Activated CD8-positive, alpha-beta memory T cell treated with anti-CD3 and anti-CD28 coated beads, Interleukin-2, amount 10 ng/mL, durations not matched to agents 7 days and 5 days (primary cell): ENCODE measurements at regions of chr11 and their contacts with region 1.

Region 1: GRCh38 chr11:128157423-128158298 is 429.7 kb downstream of the ETS1 start:
- DNase-seq: peak; percentile 67
- ATAC-seq: peak; percentile 91
- H3K4me3 Mint-ChIP-seq: peak overlapping the region; percentile 47
- H3K27ac Mint-ChIP-seq: peak overlapping the region; percentile 77
- H3K4me1 Mint-ChIP-seq: peaks cover 4% of the 10 kb centered on the region
- H3K27me3 Mint-ChIP-seq: peaks cover 9% of the 10 kb centered on the region

Region 2: GRCh38 chr11:128039140-128040021 is 118.3 kb before region 1 on chr11:
- CTCF ChIA-PET with region 1: interaction called, 54 read pairs
- DNase-seq: peak; percentile 95
- ATAC-seq: peak; percentile 91
- H3K4me3 Mint-ChIP-seq: peak overlapping the region; percentile 71
- H3K27ac Mint-ChIP-seq: peak overlapping the region; percentile 96
- H3K4me1 Mint-ChIP-seq: peaks cover 40% of the 10 kb centered on the region
- H3K27me3 Mint-ChIP-seq: no peaks in the 10 kb centered on the region

Region 3: DNA sequence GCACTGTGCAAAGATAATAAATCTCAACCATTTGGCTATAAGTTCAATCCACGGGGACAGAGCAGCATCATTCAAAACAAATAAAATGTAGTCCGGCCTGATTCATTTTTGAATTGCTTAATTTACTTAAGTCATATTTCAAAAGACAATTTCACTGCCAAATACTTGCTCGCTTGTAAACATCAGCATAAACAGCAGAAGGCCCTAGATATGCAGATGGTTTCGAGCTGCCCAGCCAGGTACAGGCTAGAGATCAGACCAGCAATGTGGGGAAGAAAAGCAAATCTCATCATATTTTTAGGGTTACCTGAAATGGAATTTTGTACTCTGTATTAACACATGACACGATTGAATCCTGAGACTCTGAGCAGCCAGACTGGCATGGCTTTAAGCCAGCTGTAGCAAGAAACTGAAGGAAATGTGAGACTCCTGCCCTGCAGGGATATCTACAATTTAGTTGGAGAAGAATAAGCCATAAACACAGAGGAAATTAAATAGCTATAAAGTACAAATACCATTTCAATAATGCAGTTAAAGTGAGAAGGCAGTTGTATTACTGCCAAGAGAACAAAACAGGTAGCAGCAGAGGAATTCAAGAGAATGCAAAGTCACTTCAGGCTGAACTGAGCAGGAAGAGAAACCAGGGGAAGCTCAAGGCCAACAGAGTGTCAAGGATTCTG is 10.6 kb before region 1 on chr11:
- CTCF ChIA-PET with region 1: interaction called, 19 read pairs
- DNase-seq: no peak
- ATAC-seq: no peak
- H3K4me3 Mint-ChIP-seq: no peak overlapping the region
- H3K27ac Mint-ChIP-seq: no peak overlapping the region
- H3K4me1 Mint-ChIP-seq: no peaks in the 10 kb centered on the region
- H3K27me3 Mint-ChIP-seq: no peaks in the 10 kb centered on the region

Region 4: GRCh38 chr11:128210148-128210940 is 52.7 kb after region 1 on chr11:
- CTCF ChIA-PET with region 1: no interaction called
- DNase-seq: no peak
- ATAC-seq: no peak
- H3K4me3 Mint-ChIP-seq: no peak overlapping the region
- H3K27ac Mint-ChIP-seq: no peak overlapping the region
- H3K4me1 Mint-ChIP-seq: peaks cover 3% of the 10 kb centered on the region
- H3K27me3 Mint-ChIP-seq: no peaks in the 10 kb centered on the region

Region 5: GRCh38 chr11:128246364-128246801 is 88.7 kb after region 1 on chr11:
- CTCF ChIA-PET with region 1: no interaction called
- DNase-seq: no peak
- ATAC-seq: no peak
- H3K4me3 Mint-ChIP-seq: no peak overlapping the region
- H3K27ac Mint-ChIP-seq: no peak overlapping the region
- H3K4me1 Mint-ChIP-seq: no peaks in the 10 kb centered on the region
- H3K27me3 Mint-ChIP-seq: peaks cover 4% of the 10 kb centered on the region

Region 6: DNA sequence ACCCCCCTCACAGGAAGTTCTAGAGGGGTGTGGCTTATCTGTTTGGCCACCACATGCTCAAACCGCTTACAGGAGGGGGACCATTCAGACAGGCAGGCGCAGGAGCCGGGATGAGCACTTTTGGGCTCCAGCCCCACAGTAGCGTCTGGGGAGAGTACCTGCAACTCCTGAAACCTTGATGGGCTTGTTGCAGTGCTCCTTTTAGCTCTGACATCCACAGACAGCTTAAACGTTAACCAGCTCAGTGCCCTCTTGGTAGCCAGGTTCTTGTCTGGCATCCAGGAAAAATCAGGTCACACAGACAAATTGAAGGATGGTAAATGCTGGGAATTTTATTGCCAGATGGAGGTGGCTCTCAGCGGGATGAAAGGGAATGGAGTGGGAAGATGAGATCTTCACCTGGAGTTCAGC is 103.4 kb after region 1 on chr11:
- CTCF ChIA-PET with region 1: no interaction called
- DNase-seq: no peak
- ATAC-seq: no peak
- H3K4me3 Mint-ChIP-seq: no peak overlapping the region
- H3K27ac Mint-ChIP-seq: no peak overlapping the region
- H3K4me1 Mint-ChIP-seq: no peaks in the 10 kb centered on the region
- H3K27me3 Mint-ChIP-seq: peaks cover 5% of the 10 kb centered on the region

Region 7: DNA sequence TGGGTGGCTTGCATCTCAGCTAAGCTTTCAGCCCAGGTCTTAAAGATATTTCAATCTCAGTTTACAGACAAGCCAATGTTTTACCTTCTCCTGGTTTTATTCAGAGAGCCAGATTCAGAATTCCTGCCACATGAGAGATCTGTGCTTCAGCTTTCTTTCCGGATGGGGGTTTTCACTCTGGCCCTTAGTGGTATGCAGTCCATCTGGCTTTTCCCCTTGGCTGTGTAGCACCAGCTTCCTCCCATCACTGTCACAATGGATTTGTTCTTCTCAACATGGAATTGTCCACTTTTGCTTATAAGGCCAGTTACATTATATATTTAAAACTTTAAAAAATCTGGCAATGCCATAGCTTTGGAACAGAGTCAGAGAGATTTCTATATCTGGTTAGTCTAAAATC is 125.8 kb after region 1 on chr11:
- CTCF ChIA-PET with region 1: interaction called, 14 read pairs
- DNase-seq: no peak
- ATAC-seq: no peak
- H3K4me3 Mint-ChIP-seq: no peak overlapping the region
- H3K27ac Mint-ChIP-seq: no peak overlapping the region
- H3K4me1 Mint-ChIP-seq: peaks cover 32% of the 10 kb centered on the region
- H3K27me3 Mint-ChIP-seq: peaks cover 5% of the 10 kb centered on the region

Region 8: GRCh38 chr11:128848815-128849455 is 691.3 kb after region 1 on chr11:
- CTCF ChIA-PET with region 1: interaction called, 16 read pairs
- DNase-seq: peak; percentile 77
- ATAC-seq: peak; percentile 81
- H3K4me3 Mint-ChIP-seq: no peak overlapping the region
- H3K27ac Mint-ChIP-seq: no peak overlapping the region
- H3K4me1 Mint-ChIP-seq: peaks cover 25% of the 10 kb centered on the region
- H3K27me3 Mint-ChIP-seq: no peaks in the 10 kb centered on the region